ENCODE measurements at regions of chr3 and their contacts with region 1.

Region 1: DNA sequence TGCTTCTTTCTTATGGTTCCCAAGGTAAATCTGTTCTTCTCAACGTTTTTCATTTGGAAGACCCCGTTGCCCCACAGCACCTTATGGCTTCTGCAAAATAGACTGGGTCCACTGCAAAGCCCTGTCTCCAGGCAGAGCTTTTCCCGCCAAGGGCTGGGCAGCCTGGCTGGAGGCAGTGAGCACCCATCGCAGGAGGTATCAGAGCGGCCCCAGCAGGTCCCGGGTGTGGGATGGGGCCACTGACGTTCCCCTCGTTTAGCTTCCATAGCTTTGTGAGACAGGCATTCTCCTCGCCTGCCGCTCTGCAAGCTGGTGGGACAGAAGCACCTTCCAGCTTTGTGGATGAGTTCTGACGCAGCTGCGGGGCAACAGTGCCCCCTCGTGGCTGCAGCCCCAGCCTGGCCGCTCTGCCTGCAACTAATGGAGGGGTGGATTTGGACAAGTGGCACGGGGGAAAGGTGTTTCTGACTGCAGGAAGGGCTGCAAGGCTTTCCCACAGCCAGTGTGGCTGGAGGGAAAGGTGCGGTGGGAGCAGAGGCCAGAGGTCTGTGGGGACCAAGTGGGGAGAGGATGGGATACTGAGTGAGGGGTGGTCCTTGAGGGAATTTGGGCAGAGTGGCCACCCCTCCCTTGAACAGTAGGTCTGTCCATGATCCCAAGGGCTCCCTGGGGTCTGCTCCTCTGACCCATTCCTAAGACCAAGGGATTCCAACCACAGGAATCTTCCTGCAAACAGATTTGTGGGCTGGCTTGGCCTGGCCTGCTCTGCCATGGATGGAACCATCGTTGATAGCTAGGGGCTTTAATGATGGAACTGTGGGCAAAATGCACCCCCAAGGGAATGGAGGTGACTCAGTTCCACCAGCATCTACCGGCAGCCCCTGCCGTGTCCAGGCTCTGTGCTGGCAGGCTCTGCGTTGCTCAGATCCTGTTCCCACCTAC is 99.4 kb downstream of the FBLN2 start:
- DNase-seq: peak; percentile 79 to 97
- H3K4me3 ChIP-seq: no peak overlapping the region
- CTCF ChIP-seq: peak in 2 of 3 donors; percentile 4 to 82
- POLR2A ChIP-seq: no peak

Region 2: GRCh38 chr3:12901623-12902045 is 746.7 kb before region 1 on chr3:
- intact Hi-C with region 1: no loop called
- DNase-seq: no peak
- H3K4me3 ChIP-seq: no peak overlapping the region
- CTCF ChIP-seq: no peak
- POLR2A ChIP-seq: no peak

Region 3: DNA sequence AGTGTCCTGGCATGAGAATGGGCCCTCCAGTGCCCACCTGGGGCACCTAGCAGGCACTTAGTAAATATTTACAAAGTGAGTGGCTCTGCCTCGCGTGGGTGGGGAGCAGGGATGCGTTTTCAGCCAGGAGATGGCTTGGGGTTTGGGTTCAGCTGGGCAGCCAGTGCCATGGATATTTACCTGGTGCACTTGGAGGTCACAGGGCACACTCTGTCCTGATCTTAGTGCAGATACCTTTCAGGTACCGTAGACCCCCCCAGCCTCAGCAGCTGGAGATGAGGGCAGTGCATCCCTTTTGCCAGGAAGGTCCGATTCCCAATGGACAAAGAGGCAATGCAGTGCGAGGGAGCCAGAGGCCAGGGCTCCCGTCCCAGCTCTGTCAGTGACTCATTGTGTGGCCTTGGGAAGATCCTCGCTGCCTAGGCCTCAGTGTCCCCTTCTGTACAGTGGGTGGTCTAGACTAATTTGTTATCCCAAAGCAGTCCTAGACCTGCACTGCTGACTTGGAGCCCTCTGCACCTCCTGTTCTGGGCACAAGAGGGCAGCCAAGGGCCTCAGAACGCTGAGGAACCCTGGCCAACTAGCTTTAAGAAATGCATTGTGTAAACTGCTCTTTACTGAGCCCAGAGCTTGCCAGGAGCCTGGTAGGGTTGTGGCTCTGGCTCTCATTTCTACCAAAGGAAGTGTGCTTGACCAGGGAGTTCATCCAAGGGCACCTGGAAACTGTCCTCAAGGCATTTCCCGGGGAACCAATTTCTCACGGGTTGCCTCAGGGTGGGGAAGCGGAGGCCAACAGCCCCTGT is 152.2 kb before region 1 on chr3:
- intact Hi-C with region 1: loop called (anchors 1 kb)
- DNase-seq: peak; percentile 84 to 96
- H3K4me3 ChIP-seq: no peak overlapping the region
- CTCF ChIP-seq: peak in 2 of 3 donors; percentile 77 to 79
- POLR2A ChIP-seq: no peak

Region 4: DNA sequence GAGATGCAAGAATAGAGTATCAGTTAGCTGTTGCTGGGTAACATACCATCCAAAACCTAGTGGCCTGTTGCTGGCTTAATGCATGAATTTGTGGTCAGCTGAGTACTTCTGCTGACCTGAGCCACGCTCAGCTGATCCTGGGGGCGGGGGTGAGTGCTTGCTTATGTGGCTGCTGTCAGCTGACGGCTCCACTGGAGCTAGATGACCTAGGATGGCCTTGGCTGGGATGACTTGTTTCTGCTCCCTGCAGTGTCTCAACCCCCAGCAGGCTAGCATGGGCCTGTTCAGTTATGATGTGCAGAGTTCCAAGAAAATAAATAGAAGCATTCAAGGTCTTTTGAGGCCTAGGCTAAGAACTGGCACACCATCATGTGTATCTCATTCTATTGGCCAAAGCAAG is 35.5 kb before region 1 on chr3:
- intact Hi-C with region 1: loop called (anchors 1 kb)
- DNase-seq: peak; percentile 81 to 90
- H3K4me3 ChIP-seq: no peak overlapping the region
- CTCF ChIP-seq: no peak
- POLR2A ChIP-seq: no peak

Region 5: GRCh38 chr3:14358426-14359211 is 710.3 kb after region 1 on chr3:
- intact Hi-C with region 1: no loop called
- DNase-seq: peak; percentile 85 to 96
- H3K4me3 ChIP-seq: no peak overlapping the region
- CTCF ChIP-seq: no peak
- POLR2A ChIP-seq: no peak